ENCODE measurements at regions of chr9 and their contacts with region 1.

Region 1: DNA sequence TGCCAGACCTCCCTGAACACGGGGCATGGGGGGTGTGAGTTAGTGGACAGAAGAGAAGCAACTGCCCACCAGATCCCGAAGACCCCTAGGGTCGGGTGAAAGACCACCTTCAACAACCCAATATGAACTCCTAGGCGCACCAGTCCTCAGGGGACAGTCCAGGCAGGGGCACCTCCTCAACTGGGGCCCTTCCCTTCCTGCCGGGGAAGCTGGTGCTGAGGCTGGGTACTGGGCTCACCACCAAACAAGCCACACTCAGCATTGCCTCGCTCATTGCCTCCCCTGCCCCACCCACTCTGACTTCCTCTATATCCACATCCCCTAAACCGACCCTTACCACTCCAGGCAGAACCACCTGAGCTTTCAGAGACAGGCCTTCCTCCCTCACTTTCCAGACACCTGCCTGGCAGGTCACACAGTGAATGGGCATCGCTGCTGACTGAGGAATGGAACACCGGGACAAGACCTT is 42.5 kb downstream of the SEMA4D start:
- DNase-seq: no peak
- H3K4me3 ChIP-seq: no peak overlapping the region
- H3K27ac ChIP-seq: 0 out of 2 replicates have a peak overlapping the region, but pooled peaks have one; percentile 45
- H3K4me1 ChIP-seq: peaks cover 10 to 19% (median 12%) of the 10 kb centered on the region in 4 experiments
- H3K27me3 ChIP-seq: no peaks in the 10 kb centered on the region
- CTCF ChIP-seq: no peak
- EP300 ChIP-seq: no peak
- POLR2A ChIP-seq: no peak
- RAD21 ChIP-seq: no peak

Region 2: GRCh38 chr9:89442981-89443814 is 12.2 kb before region 1 on chr9:
- CTCF ChIA-PET with region 1: interaction called, 10 read pairs
- POLR2A ChIA-PET with region 1: interaction called, 5 read pairs
- DNase-seq: no peak
- H3K4me3 ChIP-seq: no peak overlapping the region
- H3K27ac ChIP-seq: no peak overlapping the region
- H3K4me1 ChIP-seq: peaks cover 0 to 36% (median 7%) of the 10 kb centered on the region in 4 experiments; a peak in 6 of 7 replicates
- H3K27me3 ChIP-seq: no peaks in the 10 kb centered on the region
- CTCF ChIP-seq: no peak
- EP300 ChIP-seq: no peak
- POLR2A ChIP-seq: no peak
- RAD21 ChIP-seq: no peak

Region 3: DNA sequence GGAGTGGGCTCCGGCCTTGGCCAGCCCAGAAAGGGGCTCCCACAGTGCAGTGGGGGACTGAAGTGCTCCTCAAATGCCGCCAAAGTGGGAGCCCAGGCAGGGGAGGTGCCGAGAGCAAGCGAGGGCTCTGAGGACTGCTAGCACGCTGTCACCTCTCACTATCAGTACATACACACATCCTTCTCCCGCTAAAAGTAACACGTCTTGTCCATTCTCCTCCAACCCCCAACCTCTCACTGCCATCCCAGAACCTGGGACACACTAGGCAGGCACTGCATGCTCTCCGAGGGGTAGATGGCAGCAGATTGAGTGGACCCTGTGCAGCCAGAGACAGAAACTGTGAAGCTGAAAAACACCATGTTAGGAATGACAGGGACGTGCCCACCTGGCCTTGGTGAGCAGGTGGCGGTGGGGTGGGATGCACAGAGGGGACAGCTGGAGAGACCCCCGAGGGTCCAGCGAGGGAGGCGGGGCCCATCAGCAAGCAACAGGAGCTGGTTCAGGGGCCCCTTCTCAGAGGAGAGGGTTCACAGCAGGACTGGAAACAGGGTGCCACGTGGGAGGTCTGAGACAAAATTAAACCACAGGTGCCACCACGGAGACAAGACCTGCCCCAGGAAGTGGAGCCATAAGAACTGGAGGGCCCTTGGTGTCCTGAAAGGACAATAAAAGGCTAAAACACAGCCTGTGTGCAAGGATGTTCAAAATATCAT is 25.6 kb after region 1 on chr9:
- CTCF ChIA-PET with region 1: no interaction called
- POLR2A ChIA-PET with region 1: no interaction called
- DNase-seq: no peak
- H3K4me3 ChIP-seq: no peak overlapping the region
- H3K27ac ChIP-seq: no peak overlapping the region
- H3K4me1 ChIP-seq: peaks cover 6 to 26% (median 10%) of the 10 kb centered on the region in 4 experiments
- H3K27me3 ChIP-seq: no peaks in the 10 kb centered on the region
- CTCF ChIP-seq: no peak
- EP300 ChIP-seq: no peak
- POLR2A ChIP-seq: no peak
- RAD21 ChIP-seq: no peak

Region 4: DNA sequence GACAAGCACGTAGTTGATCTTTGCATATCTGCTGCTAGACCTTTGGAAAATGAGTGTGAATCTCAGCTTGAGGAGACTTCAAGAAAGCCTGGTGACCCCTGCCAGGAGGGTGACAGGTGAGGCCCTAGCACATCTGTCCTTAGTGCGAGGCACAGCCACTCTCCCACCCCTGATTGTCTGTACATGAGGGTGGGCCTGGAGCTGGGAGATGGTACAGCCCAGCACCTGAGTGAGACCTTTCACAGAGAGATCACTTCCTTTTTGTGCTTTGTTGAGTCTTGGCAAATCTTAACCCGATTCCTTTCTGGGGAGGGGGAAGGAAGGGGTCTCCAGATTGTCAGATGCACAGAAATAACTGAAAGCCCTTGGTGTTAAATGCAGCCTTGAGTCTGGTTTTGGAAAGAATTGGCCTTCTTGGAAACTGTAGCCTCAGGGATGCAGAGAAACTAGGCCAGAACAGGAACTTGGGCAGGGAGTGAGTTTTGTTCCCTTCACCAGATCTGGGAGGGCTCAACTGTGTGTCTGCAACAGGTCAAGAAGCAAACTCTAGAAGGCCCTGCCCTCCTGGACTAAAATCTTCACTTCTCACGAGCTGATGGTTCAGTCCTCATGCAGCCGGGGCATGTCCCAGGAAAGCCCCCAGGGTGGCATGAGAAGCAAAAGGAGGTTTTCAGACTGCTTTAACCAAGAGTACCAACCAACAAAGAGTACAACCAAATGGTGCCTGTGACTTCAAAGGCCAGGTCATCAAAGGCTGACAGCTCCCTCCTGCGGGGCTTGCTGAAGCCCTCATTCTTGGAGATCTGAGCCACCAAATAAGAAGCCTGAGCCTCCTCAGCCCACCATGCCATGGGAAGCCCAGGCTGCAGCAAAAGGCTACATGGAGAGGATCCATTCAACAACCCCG is 63.3 kb after region 1 on chr9:
- CTCF ChIA-PET with region 1: no interaction called
- POLR2A ChIA-PET with region 1: no interaction called
- DNase-seq: no peak
- H3K4me3 ChIP-seq: no peak overlapping the region
- H3K27ac ChIP-seq: no peak overlapping the region
- H3K4me1 ChIP-seq: no peaks in the 10 kb centered on the region
- H3K27me3 ChIP-seq: no peaks in the 10 kb centered on the region
- CTCF ChIP-seq: no peak
- EP300 ChIP-seq: no peak
- POLR2A ChIP-seq: no peak
- RAD21 ChIP-seq: no peak